Vagina (tissue), 2 donors: ENCODE measurements at regions of chr6 and their contacts with region 1.

Region 1: DNA sequence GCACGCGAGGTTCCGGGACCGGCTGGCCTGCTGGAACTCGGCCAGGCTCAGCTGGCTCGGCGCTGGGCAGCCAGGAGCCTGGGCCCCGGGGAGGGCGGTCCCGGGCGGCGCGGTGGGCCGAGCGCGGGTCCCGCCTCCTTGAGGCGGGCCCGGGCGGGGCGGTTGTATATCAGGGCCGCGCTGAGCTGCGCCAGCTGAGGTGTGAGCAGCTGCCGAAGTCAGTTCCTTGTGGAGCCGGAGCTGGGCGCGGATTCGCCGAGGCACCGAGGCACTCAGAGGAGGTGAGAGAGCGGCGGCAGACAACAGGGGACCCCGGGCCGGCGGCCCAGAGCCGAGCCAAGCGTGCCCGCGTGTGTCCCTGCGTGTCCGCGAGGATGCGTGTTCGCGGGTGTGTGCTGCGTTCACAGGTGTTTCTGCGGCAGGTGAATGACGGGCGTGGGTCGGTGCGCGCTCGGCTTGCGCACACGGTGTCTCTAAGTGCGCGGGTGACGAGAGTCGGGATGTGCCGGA is at the start of gene CDKN1A:
- DNase-seq: no peak
- H3K4me3 ChIP-seq: peak within 1 kb of the TSS; percentile 78 to 83
- H3K27ac ChIP-seq: peak within 1 kb of the TSS; percentile 99
- H3K4me1 ChIP-seq: peaks cover 58% of the 10 kb centered on the region
- H3K27me3 ChIP-seq: no peaks in the 10 kb centered on the region
- CTCF ChIP-seq: peak in 1 of 3 experiments; percentile 17
- POLR2A ChIP-seq: peak in 1 of 2 donors; percentile 99
- total RNA-seq, gene CDKN1A: 169 TPM

Region 2: GRCh38 chr6:34829137-34829536 is 1849.4 kb before region 1 on chr6:
- intact Hi-C with region 1: no loop called
- DNase-seq: no peak
- H3K4me3 ChIP-seq: no peak overlapping the region
- H3K27ac ChIP-seq: no peak overlapping the region
- H3K4me1 ChIP-seq: no peaks in the 10 kb centered on the region
- H3K27me3 ChIP-seq: no peaks in the 10 kb centered on the region
- CTCF ChIP-seq: no peak
- POLR2A ChIP-seq: no peak

Region 3: DNA sequence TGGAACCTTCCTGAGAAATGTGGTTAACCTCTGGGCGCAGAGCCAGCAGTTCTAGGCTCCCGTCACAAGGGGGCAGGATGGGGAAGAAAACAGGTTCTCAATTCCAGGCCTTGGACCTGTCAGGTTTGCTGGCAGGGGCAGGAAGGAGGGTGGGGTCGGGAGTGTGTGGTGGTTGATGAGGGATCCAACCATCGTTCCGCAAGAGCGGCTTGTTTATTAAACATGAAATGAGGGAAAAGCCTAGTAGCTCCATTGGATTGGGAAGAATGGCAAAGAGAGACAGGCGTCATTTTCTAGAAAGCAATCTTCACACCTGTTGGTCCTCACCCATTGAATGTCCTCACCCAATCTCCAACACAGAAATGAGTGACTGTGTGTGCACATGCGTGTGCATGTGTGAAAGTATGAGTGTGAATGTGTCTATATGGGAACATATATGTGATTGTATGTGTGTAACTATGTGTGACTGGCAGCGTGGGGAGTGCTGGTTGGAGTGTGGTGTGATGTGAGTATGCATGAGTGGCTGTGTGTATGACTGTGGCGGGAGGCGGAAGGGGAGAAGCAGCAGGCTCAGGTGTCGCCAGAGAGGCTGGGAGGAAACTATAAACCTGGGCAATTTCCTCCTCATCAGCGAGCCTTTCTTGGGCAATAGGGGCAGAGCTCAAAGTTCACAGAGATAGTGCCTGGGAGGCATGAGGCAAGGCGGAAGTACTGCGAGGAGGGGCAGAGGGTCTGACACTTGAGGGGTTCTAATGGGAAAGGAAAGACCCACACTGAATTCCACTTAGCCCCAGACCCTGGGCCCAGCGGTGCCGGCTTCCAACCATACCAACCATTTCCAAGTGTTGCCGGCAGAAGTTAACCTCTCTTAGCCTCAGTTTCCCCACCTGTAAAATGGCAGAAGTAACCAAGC is 54.8 kb before region 1 on chr6:
- intact Hi-C with region 1: loop called (anchors 5 kb)
- DNase-seq: peak in 1 of 2 donors; percentile 92
- H3K4me3 ChIP-seq: no peak overlapping the region
- H3K27ac ChIP-seq: peak overlapping the region; percentile 60
- H3K4me1 ChIP-seq: peaks cover 41% of the 10 kb centered on the region
- H3K27me3 ChIP-seq: no peaks in the 10 kb centered on the region
- CTCF ChIP-seq: peak; percentile 54 to 86 (median 74)
- POLR2A ChIP-seq: no peak

Region 4: GRCh38 chr6:36660771-36661471 is 17.7 kb before region 1 on chr6:
- intact Hi-C with region 1: no loop called
- DNase-seq: no peak
- H3K4me3 ChIP-seq: peak overlapping the region; percentile 0 to 7
- H3K27ac ChIP-seq: no peak overlapping the region
- H3K4me1 ChIP-seq: peaks cover 28% of the 10 kb centered on the region
- H3K27me3 ChIP-seq: no peaks in the 10 kb centered on the region
- CTCF ChIP-seq: no peak
- POLR2A ChIP-seq: no peak

Region 5: DNA sequence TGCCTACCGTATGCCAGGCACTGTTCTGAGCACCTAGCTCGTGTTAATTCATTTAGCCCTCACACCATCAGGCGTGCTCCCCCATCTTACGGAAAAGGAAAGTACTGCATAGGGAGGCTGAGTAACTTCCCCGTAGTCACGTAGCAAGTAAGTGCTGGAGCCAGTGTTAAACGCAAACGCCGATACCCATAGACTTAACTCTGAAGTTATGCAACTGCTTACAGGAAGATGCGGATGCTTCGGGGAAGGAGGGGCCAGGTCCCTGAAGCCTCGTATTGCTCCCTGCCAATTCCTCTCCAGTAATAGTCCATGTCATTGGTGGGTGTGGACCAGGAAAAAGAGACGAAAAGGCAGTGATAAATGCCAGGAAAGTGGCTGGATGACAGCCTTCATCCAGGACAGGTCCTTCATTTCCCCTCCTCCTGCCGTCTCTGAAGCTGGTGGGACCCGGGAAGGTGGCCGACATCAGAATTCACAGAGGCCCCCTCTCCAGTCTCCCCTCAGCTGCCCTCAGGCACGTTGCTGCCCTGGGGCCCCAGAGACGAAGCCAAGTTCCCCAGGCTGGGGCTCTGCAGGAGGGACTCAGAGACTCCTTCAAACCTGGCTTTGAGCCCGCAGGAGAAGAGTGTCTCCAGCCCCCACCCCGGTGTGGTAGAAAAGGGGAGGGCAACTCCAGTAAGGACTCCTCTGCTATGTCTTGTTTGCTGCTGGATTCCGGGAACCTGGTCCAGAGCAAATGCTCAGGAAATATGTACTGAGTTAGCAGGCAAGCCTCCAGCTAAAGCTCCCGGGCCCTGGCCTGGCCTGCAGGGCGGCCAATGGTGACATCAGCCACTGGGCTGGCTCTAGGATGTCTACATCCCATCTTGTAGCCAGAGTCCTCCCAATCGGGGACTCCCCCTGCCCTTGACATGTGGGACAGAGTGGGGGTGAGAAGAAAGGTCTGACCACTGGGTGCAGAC is 56.8 kb after region 1 on chr6:
- intact Hi-C with region 1: loop called (anchors 5 kb)
- DNase-seq: peak in 1 of 2 donors; percentile 98
- H3K4me3 ChIP-seq: peak overlapping the region; percentile 28 to 39
- H3K27ac ChIP-seq: peak overlapping the region; percentile 85
- H3K4me1 ChIP-seq: peaks cover 20% of the 10 kb centered on the region
- H3K27me3 ChIP-seq: no peaks in the 10 kb centered on the region
- CTCF ChIP-seq: peak in 1 of 3 experiments; percentile 36
- POLR2A ChIP-seq: peak in 1 of 2 donors; percentile 18